ENCODE measurements at regions of chr7 and their contacts with region 1.

Region 1: DNA sequence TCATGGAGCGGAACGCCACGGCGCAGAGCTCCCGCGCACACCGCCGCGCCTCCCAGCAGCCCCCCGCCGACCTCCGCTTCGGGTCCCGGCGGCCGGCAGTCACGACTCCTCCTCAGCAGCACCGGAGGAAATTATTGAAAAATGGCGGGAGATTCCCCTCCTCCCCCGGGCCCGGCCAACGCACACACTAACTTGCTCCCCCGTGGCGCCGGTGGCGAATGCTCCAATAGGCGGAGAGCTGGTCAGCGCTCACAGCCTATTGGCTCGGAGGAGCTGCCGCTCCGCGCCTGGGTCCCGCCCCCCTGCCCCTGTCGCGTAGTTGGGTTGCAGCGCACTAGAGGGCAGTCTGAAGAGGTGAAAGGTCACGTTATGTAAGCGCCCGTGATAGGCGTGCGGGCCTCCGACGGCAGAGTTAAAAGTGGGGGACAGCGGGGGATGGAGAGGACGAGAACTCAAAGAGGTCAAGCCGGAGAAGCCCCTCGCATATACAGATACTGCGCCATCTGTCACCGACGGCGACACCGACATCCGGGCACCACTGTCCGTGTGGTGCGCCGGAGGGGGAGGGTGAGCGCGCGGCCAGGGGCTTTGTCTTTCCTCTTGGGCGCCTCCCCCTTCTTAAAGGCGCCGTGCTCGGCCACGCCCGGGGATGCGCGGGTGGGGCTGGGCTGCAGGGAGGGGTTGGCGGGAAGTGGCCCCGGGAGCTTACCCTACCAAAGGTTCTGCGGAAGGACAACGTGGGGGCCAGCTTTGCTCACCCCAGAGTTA is at the start of gene BAZ1B:
- DNase-seq: peak; percentile 98
- H3K4me3 ChIP-seq: peak within 1 kb of the TSS; percentile 79 to 85 (median 79)
- H3K27ac ChIP-seq: peak within 1 kb of the TSS; percentile 60
- H3K4me1 ChIP-seq: peaks cover 8% of the 10 kb centered on the region
- H3K27me3 ChIP-seq: no peaks in the 10 kb centered on the region
- CTCF ChIP-seq: peak in 1 of 2 donors; percentile 28
- total RNA-seq, gene BAZ1B: 34.5 to 68.4 TPM

Region 2: DNA sequence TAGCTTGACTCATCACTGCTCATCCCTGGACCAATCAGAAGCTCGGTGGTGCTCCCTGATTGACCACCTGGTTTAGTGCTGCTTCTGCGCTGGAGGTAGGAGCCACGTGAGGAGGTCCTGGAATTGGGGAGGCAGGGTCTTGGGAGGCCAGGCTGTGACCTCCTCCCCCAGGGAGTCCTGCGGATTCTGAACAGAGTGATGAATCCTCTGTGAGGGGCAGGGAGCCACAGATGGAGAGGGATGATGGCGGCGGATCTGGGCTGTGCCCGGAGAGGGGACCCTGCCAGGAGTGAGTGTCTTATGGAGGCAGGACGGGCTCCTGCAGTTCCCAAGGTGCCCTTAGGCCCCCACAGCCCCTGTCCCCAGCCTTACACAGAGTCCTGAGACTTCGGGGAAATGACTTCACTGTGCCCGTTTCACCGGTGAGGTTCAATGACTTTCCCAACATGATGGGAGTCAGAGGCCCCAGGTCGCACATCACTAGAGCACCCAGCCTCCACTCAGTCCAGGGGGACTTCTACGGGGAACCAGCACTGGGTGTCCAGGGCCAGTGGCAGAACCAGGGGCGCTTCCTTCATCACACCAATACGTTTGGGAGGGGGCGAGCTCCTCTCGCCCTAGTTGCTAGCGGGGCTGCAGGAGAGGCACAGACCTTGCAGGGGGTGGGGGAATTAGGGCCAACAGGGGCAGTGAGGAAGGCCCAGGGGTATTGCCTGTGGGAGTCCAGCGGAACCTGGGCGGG is 145.4 kb before region 1 on chr7:
- CTCF ChIA-PET with region 1: no interaction called
- dilution Hi-C with region 1: no loop called
- in situ Hi-C with region 1: no loop called
- intact Hi-C with region 1: no loop called
- DNase-seq: no peak
- H3K4me3 ChIP-seq: no peak overlapping the region
- H3K27ac ChIP-seq: no peak overlapping the region
- H3K4me1 ChIP-seq: no peaks in the 10 kb centered on the region
- H3K27me3 ChIP-seq: peaks cover 2% of the 10 kb centered on the region
- CTCF ChIP-seq: no peak

Region 3: DNA sequence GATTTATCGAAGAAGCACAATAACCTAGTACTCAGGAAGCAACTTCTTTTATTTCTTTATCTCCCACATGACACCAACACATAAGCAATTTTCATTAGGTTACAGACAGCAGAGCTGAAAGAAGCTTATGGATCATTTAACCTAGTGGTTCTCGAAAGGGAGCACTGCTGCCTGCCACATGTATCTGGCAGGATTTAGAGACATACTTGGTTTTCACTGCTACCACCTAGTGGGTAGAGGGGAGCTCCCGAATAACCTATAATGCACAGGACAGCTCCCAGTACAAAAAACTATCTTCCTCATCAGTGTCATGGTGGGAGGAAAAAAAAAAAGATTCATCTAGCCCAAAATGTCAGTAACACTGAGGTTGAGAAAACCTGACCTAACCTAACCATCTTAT is 54.2 kb before region 1 on chr7:
- CTCF ChIA-PET with region 1: no interaction called
- dilution Hi-C with region 1: loop called (anchors 5 kb)
- in situ Hi-C with region 1: no loop called
- intact Hi-C with region 1: no loop called
- DNase-seq: no peak
- H3K4me3 ChIP-seq: no peak overlapping the region
- H3K27ac ChIP-seq: no peak overlapping the region
- H3K4me1 ChIP-seq: peaks cover 3% of the 10 kb centered on the region
- H3K27me3 ChIP-seq: no peaks in the 10 kb centered on the region
- CTCF ChIP-seq: no peak

Region 4: GRCh38 chr7:73557108-73557396 is 34.8 kb after region 1 on chr7:
- CTCF ChIA-PET with region 1: interaction called, 4 read pairs
- dilution Hi-C with region 1: loop called (anchors 5 kb)
- in situ Hi-C with region 1: no loop called
- intact Hi-C with region 1: loop called (anchors 1 kb)
- DNase-seq: peak; percentile 93
- H3K4me3 ChIP-seq: peak overlapping the region; percentile 73 to 99 (median 77)
- H3K27ac ChIP-seq: peak overlapping the region; percentile 93
- H3K4me1 ChIP-seq: peaks cover 28% of the 10 kb centered on the region
- H3K27me3 ChIP-seq: no peaks in the 10 kb centered on the region
- CTCF ChIP-seq: no peak

Region 5: GRCh38 chr7:73606801-73607691 is 84.8 kb after region 1 on chr7:
- CTCF ChIA-PET with region 1: no interaction called
- dilution Hi-C with region 1: loop called (anchors 5 kb)
- in situ Hi-C with region 1: no loop called
- intact Hi-C with region 1: no loop called
- DNase-seq: no peak
- H3K4me3 ChIP-seq: no peak overlapping the region
- H3K27ac ChIP-seq: no peak overlapping the region
- H3K4me1 ChIP-seq: peaks cover 9% of the 10 kb centered on the region
- H3K27me3 ChIP-seq: no peaks in the 10 kb centered on the region
- CTCF ChIP-seq: peak; percentile 85 to 98

Region 6: GRCh38 chr7:73726083-73726466 is 203.8 kb after region 1 on chr7:
- CTCF ChIA-PET with region 1: interaction called, 3 read pairs
- dilution Hi-C with region 1: loop called (anchors 5 kb)
- in situ Hi-C with region 1: no loop called
- intact Hi-C with region 1: no loop called
- DNase-seq: no peak
- H3K4me3 ChIP-seq: no peak overlapping the region
- H3K27ac ChIP-seq: no peak overlapping the region
- H3K4me1 ChIP-seq: peaks cover 7% of the 10 kb centered on the region
- H3K27me3 ChIP-seq: no peaks in the 10 kb centered on the region
- CTCF ChIP-seq: no peak

Region 7: DNA sequence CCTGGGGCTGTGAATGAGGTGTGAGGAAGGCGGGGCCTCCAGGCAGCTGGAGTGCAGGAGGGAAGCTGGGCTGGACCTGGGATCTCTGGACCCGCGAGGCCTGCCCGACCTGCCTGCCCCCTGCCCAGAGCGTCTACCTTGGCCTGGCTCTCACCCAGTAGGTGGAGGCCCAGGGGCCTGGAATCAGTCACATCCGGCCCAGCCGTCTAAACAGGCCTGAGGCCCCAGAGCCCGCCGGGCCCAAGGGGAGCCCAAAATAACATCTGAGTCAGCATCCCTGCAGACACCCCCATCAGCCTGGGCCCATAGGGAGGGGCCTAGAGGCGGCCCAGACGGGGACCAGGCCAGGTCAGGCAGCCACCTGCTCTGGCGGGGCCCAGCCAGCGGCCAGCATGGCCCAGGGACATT is 490.6 kb after region 1 on chr7:
- CTCF ChIA-PET with region 1: no interaction called
- dilution Hi-C with region 1: no loop called
- in situ Hi-C with region 1: no loop called
- intact Hi-C with region 1: no loop called
- DNase-seq: peak; percentile 48
- H3K4me3 ChIP-seq: no peak overlapping the region
- H3K27ac ChIP-seq: no peak overlapping the region
- H3K4me1 ChIP-seq: peaks cover 9% of the 10 kb centered on the region
- H3K27me3 ChIP-seq: no peaks in the 10 kb centered on the region
- CTCF ChIP-seq: no peak

Measured in mammary epithelial cell (primary cell).